Left ventricle myocardium superior (tissue), 1 donor: ENCODE measurements at regions of chr11 and their contacts with region 1.

Region 1: DNA sequence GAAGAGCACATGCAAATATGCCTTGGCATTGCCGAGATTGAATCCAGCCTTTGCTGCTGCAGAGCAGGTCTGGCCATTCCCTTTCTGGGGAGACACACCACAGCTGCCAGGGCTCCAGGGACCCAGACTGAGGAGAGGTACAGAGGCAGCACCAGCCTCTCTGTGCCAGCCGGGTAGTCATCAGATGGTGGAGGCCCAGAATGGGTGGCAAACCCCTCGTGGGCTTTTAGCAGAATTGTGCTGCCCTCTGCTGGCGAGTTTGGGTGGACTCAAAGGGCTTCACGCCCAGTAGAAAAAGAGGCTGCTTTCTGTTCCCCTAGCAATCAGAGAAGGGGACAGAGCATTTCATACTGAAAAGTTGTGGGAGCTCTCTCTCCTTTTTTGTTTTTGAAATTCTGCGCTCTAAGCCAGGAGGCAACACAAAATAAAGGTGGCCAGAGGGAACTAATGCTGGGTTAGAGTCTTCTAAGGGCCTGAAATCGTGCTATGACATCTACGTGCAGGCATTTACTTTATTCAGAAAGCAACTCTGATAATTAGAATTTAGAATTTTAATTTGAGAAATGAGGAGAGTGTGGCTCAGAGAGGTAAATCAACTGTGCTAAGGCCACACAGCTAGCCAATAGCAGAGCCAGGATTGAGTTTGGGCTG is 158.8 kb upstream of the NAV2 start:
- DNase-seq: peak; percentile 86
- ATAC-seq: peak; percentile 85

Region 2: GRCh38 chr11:19071255-19071654 is 482.6 kb before region 1 on chr11:
- intact Hi-C with region 1: loop called (anchors 5 kb)
- DNase-seq: peak; percentile 73
- ATAC-seq: peak; percentile 93

Region 3: GRCh38 chr11:19160847-19161246 is 393.0 kb before region 1 on chr11:
- intact Hi-C with region 1: loop called (anchors 10 kb)
- DNase-seq: no peak
- ATAC-seq: peak; percentile 61

Region 4: DNA sequence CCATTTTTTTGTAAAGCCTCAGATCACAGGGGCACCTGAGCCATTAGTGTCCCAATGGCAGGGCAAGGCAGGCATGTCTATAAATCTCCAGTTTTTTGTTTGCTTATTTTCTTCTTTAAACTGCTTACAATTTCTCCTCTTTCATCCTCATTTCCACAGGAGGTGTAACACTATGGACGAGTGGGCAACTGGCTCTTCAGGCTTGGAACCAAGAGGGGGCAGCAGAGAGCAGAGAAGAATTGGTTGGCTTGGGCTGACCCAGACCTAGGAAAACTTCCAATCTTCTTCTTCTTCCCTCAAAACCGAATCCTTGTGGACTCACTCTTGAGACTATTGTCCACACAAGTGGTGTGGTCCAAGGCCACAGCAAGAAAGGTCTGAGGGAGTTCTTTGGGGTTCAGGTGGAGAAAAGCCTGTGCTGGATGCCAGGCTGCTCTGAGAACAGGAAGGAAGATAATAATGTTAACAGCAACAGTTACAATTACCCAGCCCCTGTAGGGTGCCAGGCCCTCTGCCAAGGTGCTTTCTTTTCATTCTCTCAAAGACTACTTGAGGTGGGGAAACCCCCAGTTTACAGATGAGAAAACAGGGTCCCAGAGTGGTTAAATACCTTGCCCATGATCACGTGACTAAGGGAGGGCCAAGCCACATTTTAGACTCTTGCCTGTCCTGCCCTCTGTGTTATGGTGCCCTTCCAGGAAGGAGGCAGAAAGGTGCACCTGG is 242.3 kb before region 1 on chr11:
- intact Hi-C with region 1: loop called (anchors 10 kb)
- DNase-seq: peak; percentile 70
- ATAC-seq: peak; percentile 92

Region 5: GRCh38 chr11:19903620-19904069 is 349.8 kb after region 1 on chr11:
- intact Hi-C with region 1: loop called (anchors 5 kb)
- DNase-seq: peak; percentile 69
- ATAC-seq: peak; percentile 77